Activated B cell treated with CpG ODN at 0.5 μM for 24 hours (primary cell): ENCODE measurements at regions of chr2 and their contacts with region 1.

Region 1: GRCh38 chr2:119873350-119874315 is 113.9 kb downstream of the PTPN4 start:
- DNase-seq: no peak
- ATAC-seq: no peak
- H3K4me3 Mint-ChIP-seq: no peak overlapping the region
- H3K27ac Mint-ChIP-seq: no peak overlapping the region
- H3K4me1 Mint-ChIP-seq: no peaks in the 10 kb centered on the region
- H3K27me3 Mint-ChIP-seq: no peaks in the 10 kb centered on the region
- CTCF ChIP-seq: no peak

Region 2: DNA sequence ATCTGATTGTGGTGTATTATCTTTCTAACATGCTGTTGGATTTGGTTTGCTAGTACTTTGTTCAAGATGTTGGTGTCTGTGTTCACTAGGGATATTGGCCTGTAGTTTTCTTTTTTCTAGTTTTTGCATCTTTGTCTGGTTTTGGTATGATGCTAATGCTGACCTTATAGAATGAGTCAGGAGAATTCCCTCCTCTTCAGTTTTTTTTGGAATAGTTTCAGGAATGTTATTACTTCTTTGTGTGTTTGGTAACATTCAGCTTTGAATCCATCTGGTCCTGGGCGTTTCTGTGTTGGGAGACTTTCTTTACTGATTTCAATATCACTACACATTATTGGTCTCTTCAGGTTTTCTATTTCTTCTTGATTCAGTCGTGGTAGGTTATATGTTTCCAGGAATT is 15.0 kb after region 1 on chr2:
- CTCF ChIA-PET with region 1: no interaction called
- POLR2A ChIA-PET with region 1: interaction called, 3 read pairs
- intact Hi-C with region 1: loop called (anchors 1 kb)
- DNase-seq: no peak
- ATAC-seq: no peak
- H3K4me3 Mint-ChIP-seq: no peak overlapping the region
- H3K27ac Mint-ChIP-seq: no peak overlapping the region
- H3K4me1 Mint-ChIP-seq: no peaks in the 10 kb centered on the region
- H3K27me3 Mint-ChIP-seq: no peaks in the 10 kb centered on the region
- CTCF ChIP-seq: no peak